GM10248 (cell line): ENCODE measurements at regions of chr1 and their contacts with region 1.

Region 1: GRCh38 chr1:41282679-41283317 is 40.7 kb upstream of the SCMH1 start:
- DNase-seq: peak; percentile 66
- CTCF ChIP-seq: peak; percentile 78

Region 2: DNA sequence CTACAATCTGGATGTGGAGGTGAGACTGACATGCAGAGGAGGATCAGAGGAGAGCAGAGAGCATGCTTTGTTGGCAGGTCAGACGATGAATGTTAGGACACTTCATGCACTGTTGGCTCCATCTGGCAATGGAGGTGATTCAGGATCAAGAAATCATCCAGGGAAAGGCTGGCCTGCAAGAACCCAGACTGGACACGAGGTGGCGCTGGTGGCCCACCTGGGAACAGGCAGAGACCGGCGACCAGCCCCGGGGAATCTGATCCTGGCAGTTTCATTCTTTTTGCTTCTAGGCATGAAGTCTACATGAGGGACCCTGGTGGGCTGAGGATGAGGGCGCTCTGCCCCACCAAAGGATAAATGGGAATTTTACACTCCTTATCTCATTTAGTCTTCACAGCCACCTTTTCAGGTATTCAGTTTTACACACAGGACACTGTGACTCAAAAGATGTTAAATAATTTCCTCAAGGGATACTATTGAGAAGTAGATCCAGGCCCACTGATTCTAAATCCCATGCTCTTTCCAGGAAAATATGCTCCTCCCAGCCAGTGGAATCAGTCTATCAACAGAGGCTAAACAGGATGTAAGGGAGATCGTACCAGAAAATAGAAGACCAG is 14.5 kb before region 1 on chr1:
- CTCF ChIA-PET with region 1: interaction called, 18 read pairs
- POLR2A ChIA-PET with region 1: no interaction called
- DNase-seq: peak; percentile 83
- CTCF ChIP-seq: peak; percentile 95

Region 3: GRCh38 chr1:41313661-41314131 is 30.9 kb after region 1 on chr1:
- CTCF ChIA-PET with region 1: interaction called, 31 read pairs
- POLR2A ChIA-PET with region 1: no interaction called
- DNase-seq: peak; percentile 44
- CTCF ChIP-seq: peak; percentile 50

Region 4: DNA sequence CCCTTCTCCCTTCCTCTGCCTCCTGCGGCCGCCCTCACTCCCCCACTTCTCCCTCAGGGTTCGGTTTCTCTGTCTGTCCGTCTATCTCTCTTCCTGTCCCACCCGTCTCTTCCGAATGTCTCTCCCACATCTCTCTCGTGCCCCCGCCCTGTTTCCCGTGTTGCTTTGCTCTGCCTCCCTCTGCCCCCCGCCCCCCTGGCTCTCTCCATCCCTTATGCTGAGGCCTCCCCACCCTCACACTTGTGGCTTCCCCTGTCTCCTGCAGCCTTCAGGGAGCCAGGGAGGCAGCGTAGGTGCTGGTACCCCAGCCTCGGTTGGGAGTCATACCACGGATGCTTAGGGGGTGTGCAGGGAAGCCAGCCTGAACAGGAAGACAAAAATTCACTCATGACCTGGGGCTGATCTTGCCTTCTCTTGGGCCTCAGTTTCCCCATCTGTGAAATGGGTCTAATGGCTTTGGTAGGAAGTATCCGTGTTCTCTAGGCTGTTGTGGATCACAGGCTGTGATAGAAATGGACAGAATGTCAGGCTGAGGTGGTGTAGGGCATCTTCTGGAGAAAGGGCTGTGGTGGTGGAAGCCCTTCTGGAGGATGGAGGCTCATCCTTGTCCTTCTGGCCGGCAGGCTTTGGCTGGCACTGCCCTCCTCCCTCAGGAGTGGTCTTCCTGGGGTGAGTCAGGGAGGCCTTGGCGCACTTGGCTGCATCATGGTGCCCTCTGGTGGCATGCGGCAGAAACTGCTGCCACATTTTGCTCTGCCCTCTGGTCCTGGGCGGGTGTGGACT is 133.9 kb after region 1 on chr1:
- CTCF ChIA-PET with region 1: interaction called, 39 read pairs
- POLR2A ChIA-PET with region 1: no interaction called
- DNase-seq: peak; percentile 84
- CTCF ChIP-seq: peak; percentile 98

Region 5: GRCh38 chr1:41432481-41433280 is 149.9 kb after region 1 on chr1:
- CTCF ChIA-PET with region 1: interaction called, 61 read pairs
- POLR2A ChIA-PET with region 1: no interaction called
- DNase-seq: peak; percentile 88
- CTCF ChIP-seq: peak; percentile 90